H1 (cell line): ENCODE measurements at regions of chr6 and their contacts with region 1.

Region 1: GRCh38 chr6:127516666-127517273 is 2.4 kb downstream of the MTCL3 start:
- DNase-seq: peak in 1 of 2 experiments; percentile 74
- H3K4me3 ChIP-seq: peak overlapping the region; percentile 62 to 74 (median 74)
- H3K27ac ChIP-seq: no peak overlapping the region
- H3K4me1 ChIP-seq: peaks cover 0 to 7% (median 3%) of the 10 kb centered on the region in 4 experiments; a peak in 4 of 7 replicates
- H3K27me3 ChIP-seq: peaks cover 0 to 13% (median 11%) of the 10 kb centered on the region in 4 experiments; a peak in 5 of 7 replicates
- CTCF ChIP-seq: peak; percentile 71 to 81 (median 80)
- EP300 ChIP-seq: no peak
- POLR2A ChIP-seq: no peak
- RAD21 ChIP-seq: peak; percentile 25 to 34

Region 2: GRCh38 chr6:127484212-127484858 is 32.4 kb before region 1 on chr6:
- CTCF ChIA-PET with region 1: interaction called, 65 read pairs
- POLR2A ChIA-PET with region 1: interaction called, 34 read pairs
- DNase-seq: no peak
- H3K4me3 ChIP-seq: peak overlapping the region in 1 of 4 experiments; percentile 44; a peak in 1 of 8 replicates
- H3K27ac ChIP-seq: peak overlapping the region; percentile 90
- H3K4me1 ChIP-seq: peaks cover 0 to 31% (median 16%) of the 10 kb centered on the region in 4 experiments
- H3K27me3 ChIP-seq: no peaks in the 10 kb centered on the region
- CTCF ChIP-seq: no peak
- EP300 ChIP-seq: no peak
- POLR2A ChIP-seq: no peak
- RAD21 ChIP-seq: no peak

Region 3: GRCh38 chr6:127503022-127503421 is 13.7 kb before region 1 on chr6:
- CTCF ChIA-PET with region 1: interaction called, 50 read pairs
- POLR2A ChIA-PET with region 1: interaction called, 5 read pairs
- DNase-seq: no peak
- H3K4me3 ChIP-seq: no peak overlapping the region
- H3K27ac ChIP-seq: no peak overlapping the region
- H3K4me1 ChIP-seq: no peaks in the 10 kb centered on the region
- H3K27me3 ChIP-seq: no peaks in the 10 kb centered on the region
- CTCF ChIP-seq: no peak
- EP300 ChIP-seq: no peak
- POLR2A ChIP-seq: no peak
- RAD21 ChIP-seq: no peak

Region 4: GRCh38 chr6:127539272-127539671 is 22.5 kb after region 1 on chr6:
- CTCF ChIA-PET with region 1: interaction called, 81 read pairs
- POLR2A ChIA-PET with region 1: no interaction called
- DNase-seq: no peak
- H3K4me3 ChIP-seq: no peak overlapping the region
- H3K27ac ChIP-seq: no peak overlapping the region
- H3K4me1 ChIP-seq: no peaks in the 10 kb centered on the region
- H3K27me3 ChIP-seq: no peaks in the 10 kb centered on the region
- CTCF ChIP-seq: peak in 1 of 3 experiments; percentile 1; a peak in 1 of 4 replicates
- EP300 ChIP-seq: no peak
- POLR2A ChIP-seq: no peak
- RAD21 ChIP-seq: peak in 1 of 2 experiments; percentile 35; a peak in 3 of 4 replicates

Region 5: DNA sequence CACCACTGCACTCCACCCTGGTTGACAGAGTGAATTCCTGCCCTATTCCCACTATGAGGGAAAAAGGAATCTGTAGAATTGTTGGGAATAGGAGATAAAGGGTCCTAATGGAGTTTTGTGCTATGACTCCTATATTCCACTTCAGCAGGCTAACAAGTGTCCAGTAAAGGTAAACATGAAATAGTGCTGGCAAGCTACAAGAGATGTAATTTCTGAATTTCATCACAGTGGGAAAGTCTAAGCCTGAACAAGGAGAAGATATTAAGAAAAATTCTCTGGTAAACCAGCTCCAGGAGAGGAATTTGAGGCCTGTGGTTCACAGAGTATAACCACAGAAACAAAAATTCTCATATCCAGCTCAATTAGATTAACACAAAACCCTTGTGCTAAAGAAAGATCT is 49.9 kb after region 1 on chr6:
- CTCF ChIA-PET with region 1: no interaction called
- POLR2A ChIA-PET with region 1: no interaction called
- DNase-seq: no peak
- H3K4me3 ChIP-seq: no peak overlapping the region
- H3K27ac ChIP-seq: no peak overlapping the region
- H3K4me1 ChIP-seq: no peaks in the 10 kb centered on the region
- H3K27me3 ChIP-seq: no peaks in the 10 kb centered on the region
- CTCF ChIP-seq: no peak
- EP300 ChIP-seq: no peak
- POLR2A ChIP-seq: no peak
- RAD21 ChIP-seq: no peak

Region 6: GRCh38 chr6:128412680-128413079 is 895.9 kb after region 1 on chr6:
- CTCF ChIA-PET with region 1: no interaction called
- POLR2A ChIA-PET with region 1: no interaction called
- DNase-seq: no peak
- H3K4me3 ChIP-seq: no peak overlapping the region
- H3K27ac ChIP-seq: no peak overlapping the region
- H3K4me1 ChIP-seq: peaks cover 0 to 5% (median 0%) of the 10 kb centered on the region in 4 experiments; a peak in 3 of 7 replicates
- H3K27me3 ChIP-seq: no peaks in the 10 kb centered on the region
- CTCF ChIP-seq: no peak
- EP300 ChIP-seq: no peak
- POLR2A ChIP-seq: no peak
- RAD21 ChIP-seq: no peak